Activated T-helper 1 cell treated with anti-CD3 and anti-CD28 coated beads, Interleukin-12 subunit alpha, Interleukin-12 subunit beta, Interleukin-2, Interleukin-4 antibody, amounts not matched to agents 30 ng/mL and 10 ng/mL and 1 ng/mL, durations not matched to agents 14 hours and 24 hours and 36 hours (primary cell): ENCODE measurements at regions of chr9 and their contacts with region 1.

Region 1: GRCh38 chr9:33032865-33033264 is 7.8 kb downstream of the DNAJA1 start:
- DNase-seq: no peak
- H3K4me3 Mint-ChIP-seq: no peak overlapping the region
- H3K27ac Mint-ChIP-seq: no peak overlapping the region
- H3K4me1 Mint-ChIP-seq: peaks cover 65% of the 10 kb centered on the region
- H3K27me3 Mint-ChIP-seq: no peaks in the 10 kb centered on the region

Region 2: GRCh38 chr9:32811246-32811645 is 221.6 kb before region 1 on chr9:
- intact Hi-C with region 1: no loop called
- DNase-seq: no peak
- H3K4me3 Mint-ChIP-seq: no peak overlapping the region
- H3K27ac Mint-ChIP-seq: no peak overlapping the region
- H3K4me1 Mint-ChIP-seq: no peaks in the 10 kb centered on the region
- H3K27me3 Mint-ChIP-seq: no peaks in the 10 kb centered on the region

Region 3: GRCh38 chr9:33044127-33044673 is 11.3 kb after region 1 on chr9:
- intact Hi-C with region 1: loop called (anchors 1 kb)
- DNase-seq: peak; percentile 61
- H3K4me3 Mint-ChIP-seq: peak overlapping the region; percentile 80
- H3K27ac Mint-ChIP-seq: peak overlapping the region; percentile 58
- H3K4me1 Mint-ChIP-seq: peaks cover 21% of the 10 kb centered on the region
- H3K27me3 Mint-ChIP-seq: no peaks in the 10 kb centered on the region

Region 4: GRCh38 chr9:33106827-33107621 is 74.2 kb after region 1 on chr9:
- intact Hi-C with region 1: no loop called
- DNase-seq: no peak
- H3K4me3 Mint-ChIP-seq: no peak overlapping the region
- H3K27ac Mint-ChIP-seq: peak overlapping the region; percentile 29
- H3K4me1 Mint-ChIP-seq: peaks cover 9% of the 10 kb centered on the region
- H3K27me3 Mint-ChIP-seq: no peaks in the 10 kb centered on the region